H1 (cell line): ENCODE measurements at regions of chr5 and their contacts with region 1.

Region 1: GRCh38 chr5:33936004-33936380 is 194 bp upstream of the RXFP3 start:
- DNase-seq: peak in 1 of 2 experiments; percentile 94
- H3K4me3 ChIP-seq: peak overlapping the region; percentile 45 to 71 (median 66)
- H3K27ac ChIP-seq: no peak overlapping the region
- H3K4me1 ChIP-seq: peaks cover 2 to 5% (median 3%) of the 10 kb centered on the region in 4 experiments; a peak in 5 of 7 replicates
- H3K27me3 ChIP-seq: peaks cover 0 to 17% (median 13%) of the 10 kb centered on the region in 4 experiments; a peak in 5 of 7 replicates
- CTCF ChIP-seq: peak in 1 of 3 experiments; percentile 21; a peak in 1 of 4 replicates
- EP300 ChIP-seq: no peak
- POLR2A ChIP-seq: no peak
- RAD21 ChIP-seq: peak; percentile 21 to 39; a peak in 1 of 4 replicates

Region 2: GRCh38 chr5:33675958-33676464 is 260.0 kb before region 1 on chr5:
- CTCF ChIA-PET with region 1: interaction called, 12 read pairs
- POLR2A ChIA-PET with region 1: no interaction called
- DNase-seq: no peak
- H3K4me3 ChIP-seq: no peak overlapping the region
- H3K27ac ChIP-seq: no peak overlapping the region
- H3K4me1 ChIP-seq: no peaks in the 10 kb centered on the region
- H3K27me3 ChIP-seq: no peaks in the 10 kb centered on the region
- CTCF ChIP-seq: no peak
- EP300 ChIP-seq: no peak
- POLR2A ChIP-seq: no peak
- RAD21 ChIP-seq: no peak

Region 3: DNA sequence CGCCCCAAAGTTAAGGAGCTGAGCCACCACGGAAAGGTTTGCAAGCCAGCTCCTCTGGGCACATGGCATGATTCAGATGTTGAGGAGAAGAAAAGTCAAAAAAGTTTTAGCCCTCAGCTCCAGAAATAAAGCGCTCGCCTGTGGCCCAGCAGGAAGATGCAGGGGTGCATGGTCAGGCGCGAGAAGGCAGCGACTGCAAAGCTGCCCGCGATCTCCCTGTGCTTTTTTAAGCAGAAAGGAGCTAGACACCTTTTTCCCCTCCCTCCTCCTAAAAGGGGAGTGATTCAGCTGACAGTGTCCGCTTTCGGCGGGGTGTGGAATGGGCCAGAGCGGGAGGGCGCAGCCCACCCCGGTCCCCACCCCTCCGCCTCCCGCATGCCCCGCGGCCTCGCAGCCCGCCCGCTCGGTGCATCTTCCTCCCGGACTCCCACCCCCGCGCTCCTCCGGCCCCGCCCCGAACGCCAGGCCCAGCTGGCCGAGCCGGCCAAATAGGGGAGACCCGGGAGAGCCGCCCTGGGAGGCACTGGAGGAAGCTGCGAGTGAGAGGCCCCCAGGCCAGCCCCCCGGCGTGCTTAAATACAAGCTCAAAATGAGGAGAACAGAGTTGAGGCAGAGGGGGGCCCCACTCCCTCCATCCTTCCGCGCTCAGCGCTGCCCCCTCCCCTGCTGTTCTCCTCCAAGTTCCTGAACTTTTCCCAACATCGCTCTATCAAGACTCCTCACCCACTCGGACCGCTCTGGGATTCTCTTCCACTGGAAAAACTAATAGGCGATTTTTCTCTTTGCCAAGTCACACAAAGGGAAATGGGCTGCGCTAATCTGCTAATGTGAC is 44.0 kb before region 1 on chr5 and contains the start of gene ADAMTS12:
- CTCF ChIA-PET with region 1: interaction called, 12 read pairs
- POLR2A ChIA-PET with region 1: no interaction called
- DNase-seq: peak in 1 of 2 experiments; percentile 81
- H3K4me3 ChIP-seq: peak within 1 kb of the TSS; percentile 50 to 64 (median 56)
- H3K27ac ChIP-seq: no peak within 1 kb of the TSS
- H3K4me1 ChIP-seq: peaks cover 4 to 18% (median 10%) of the 10 kb centered on the region in 4 experiments
- H3K27me3 ChIP-seq: no peaks in the 10 kb centered on the region; a peak in 1 of 7 replicates
- CTCF ChIP-seq: no peak
- EP300 ChIP-seq: no peak
- POLR2A ChIP-seq: 0 out of 3 replicates have a peak, but pooled peaks of 1 of the 2 experiments have one; percentile 14
- RAD21 ChIP-seq: no peak
- total RNA-seq, gene ADAMTS12: 12.3 and 12.8 TPM in 2 replicates